Naive thymus-derived CD4-positive, alpha-beta T cell (primary cell): ENCODE measurements at regions of chr1 and their contacts with region 1.

Region 1: GRCh38 chr1:116570358-116571200 is at the start of gene CD58:
- DNase-seq: peak; percentile 35 to 86 (median 64)
- ATAC-seq: peak; percentile 87
- H3K4me3 ChIP-seq: peak within 1 kb of the TSS; percentile 83
- H3K4me3 Mint-ChIP-seq: peak within 1 kb of the TSS; percentile 86 to 97 (median 90)
- H3K27ac ChIP-seq: peak within 1 kb of the TSS; percentile 70
- H3K27ac Mint-ChIP-seq: peak within 1 kb of the TSS in 7 of 9 donors; percentile 68 to 95 (median 78)
- H3K4me1 ChIP-seq: peaks cover 10 to 30% of the 10 kb centered on the region in 2 donors
- H3K4me1 Mint-ChIP-seq: peaks cover 12 to 62% (median 31%) of the 10 kb centered on the region in 7 donors
- H3K27me3 ChIP-seq: no peaks in the 10 kb centered on the region
- H3K27me3 Mint-ChIP-seq: no peaks in the 10 kb centered on the region
- total RNA-seq, gene CD58: 3.3 to 35.0 (median 4.4) TPM

Region 2: DNA sequence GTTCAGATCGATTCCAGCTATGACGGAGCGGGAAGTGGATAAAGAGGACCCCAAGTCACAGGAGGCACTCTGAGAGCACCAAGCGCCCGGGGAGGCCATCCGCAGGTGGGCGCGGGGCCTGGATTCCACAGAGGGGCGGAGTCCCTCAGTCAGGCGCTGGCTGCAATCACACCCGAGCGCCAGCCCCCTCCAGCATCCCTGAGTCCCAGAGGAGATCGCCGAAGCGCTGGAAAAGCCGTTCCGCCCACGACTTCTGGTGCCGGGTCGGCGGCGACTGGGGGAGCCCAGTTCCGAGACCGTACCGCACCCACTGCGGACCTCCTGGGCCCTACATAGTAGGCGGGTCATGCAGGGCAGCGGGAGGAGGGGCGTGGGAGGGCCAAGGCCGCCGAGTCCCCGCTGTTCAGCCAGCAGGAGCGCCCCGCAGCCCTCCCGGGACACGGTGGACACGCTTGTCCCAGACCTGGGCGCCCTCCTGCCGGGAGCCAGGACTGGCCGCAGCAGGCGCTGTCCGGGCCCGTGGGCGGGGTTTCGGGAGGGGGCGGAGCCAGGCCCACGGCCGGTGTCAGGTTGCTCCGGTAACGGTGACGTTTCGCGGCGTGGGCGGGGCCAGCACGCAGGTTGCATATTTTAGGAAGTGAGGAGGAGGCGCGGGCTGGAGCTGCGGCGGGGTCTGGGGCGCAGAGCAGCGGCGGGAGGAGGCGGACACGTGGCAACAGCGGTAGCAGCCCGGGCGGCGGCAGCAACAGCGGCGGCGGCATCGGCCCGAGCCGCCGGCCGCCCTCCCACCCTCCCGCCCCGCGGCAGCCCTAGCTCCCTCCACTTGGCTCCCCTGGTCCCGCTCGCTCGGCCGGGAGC is 197.8 kb before region 1 on chr1 and contains the start of gene ATP1A1:
- CTCF ChIA-PET with region 1: no interaction called
- POLR2A ChIA-PET with region 1: no interaction called
- intact Hi-C with region 1: loop called in 1 of 2 experiments (anchors 2 kb)
- DNase-seq: peak; percentile 94 to 99 (median 96)
- ATAC-seq: peak; percentile 89
- H3K4me3 ChIP-seq: peak within 1 kb of the TSS; percentile 94
- H3K4me3 Mint-ChIP-seq: peak within 1 kb of the TSS; percentile 91 to 99 (median 98)
- H3K27ac ChIP-seq: peak within 1 kb of the TSS; percentile 98
- H3K27ac Mint-ChIP-seq: peak within 1 kb of the TSS; percentile 89 to 98 (median 96)
- H3K4me1 ChIP-seq: peaks cover 18 to 20% of the 10 kb centered on the region in 2 donors
- H3K4me1 Mint-ChIP-seq: peaks cover 15 to 54% (median 35%) of the 10 kb centered on the region in 7 donors
- H3K27me3 ChIP-seq: no peaks in the 10 kb centered on the region
- H3K27me3 Mint-ChIP-seq: peaks cover 0 to 29% (median 0%) of the 10 kb centered on the region in 5 donors
- total RNA-seq, gene ATP1A1: 228 to 315 (median 287) TPM

Region 3: DNA sequence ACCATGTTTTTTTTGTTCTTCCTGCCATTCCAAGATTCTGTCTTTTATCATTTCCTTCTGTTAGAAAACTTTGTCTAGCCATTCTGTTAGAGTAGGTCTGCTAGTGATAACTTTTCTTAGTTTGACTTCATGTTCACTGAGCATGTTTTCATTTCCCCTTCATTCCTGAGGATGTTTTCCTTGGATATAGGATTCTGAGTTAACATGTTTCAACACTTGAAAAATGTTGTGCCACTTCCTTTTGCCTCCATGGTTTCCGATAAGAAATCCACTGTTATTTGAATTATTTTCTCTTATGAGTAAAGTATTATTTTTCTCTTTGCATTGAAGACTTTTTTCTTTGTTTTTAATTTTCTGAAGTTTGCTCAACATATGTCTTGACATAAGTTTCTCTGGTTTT is 130.9 kb before region 1 on chr1:
- CTCF ChIA-PET with region 1: no interaction called
- POLR2A ChIA-PET with region 1: no interaction called
- intact Hi-C with region 1: no loop called
- DNase-seq: no peak
- ATAC-seq: no peak
- H3K4me3 ChIP-seq: no peak overlapping the region
- H3K4me3 Mint-ChIP-seq: no peak overlapping the region
- H3K27ac ChIP-seq: no peak overlapping the region
- H3K27ac Mint-ChIP-seq: no peak overlapping the region
- H3K4me1 ChIP-seq: no peaks in the 10 kb centered on the region
- H3K4me1 Mint-ChIP-seq: peaks cover 0 to 3% (median 0%) of the 10 kb centered on the region in 7 donors
- H3K27me3 ChIP-seq: no peaks in the 10 kb centered on the region
- H3K27me3 Mint-ChIP-seq: peaks cover 0 to 44% (median 0%) of the 10 kb centered on the region in 5 donors

Region 4: DNA sequence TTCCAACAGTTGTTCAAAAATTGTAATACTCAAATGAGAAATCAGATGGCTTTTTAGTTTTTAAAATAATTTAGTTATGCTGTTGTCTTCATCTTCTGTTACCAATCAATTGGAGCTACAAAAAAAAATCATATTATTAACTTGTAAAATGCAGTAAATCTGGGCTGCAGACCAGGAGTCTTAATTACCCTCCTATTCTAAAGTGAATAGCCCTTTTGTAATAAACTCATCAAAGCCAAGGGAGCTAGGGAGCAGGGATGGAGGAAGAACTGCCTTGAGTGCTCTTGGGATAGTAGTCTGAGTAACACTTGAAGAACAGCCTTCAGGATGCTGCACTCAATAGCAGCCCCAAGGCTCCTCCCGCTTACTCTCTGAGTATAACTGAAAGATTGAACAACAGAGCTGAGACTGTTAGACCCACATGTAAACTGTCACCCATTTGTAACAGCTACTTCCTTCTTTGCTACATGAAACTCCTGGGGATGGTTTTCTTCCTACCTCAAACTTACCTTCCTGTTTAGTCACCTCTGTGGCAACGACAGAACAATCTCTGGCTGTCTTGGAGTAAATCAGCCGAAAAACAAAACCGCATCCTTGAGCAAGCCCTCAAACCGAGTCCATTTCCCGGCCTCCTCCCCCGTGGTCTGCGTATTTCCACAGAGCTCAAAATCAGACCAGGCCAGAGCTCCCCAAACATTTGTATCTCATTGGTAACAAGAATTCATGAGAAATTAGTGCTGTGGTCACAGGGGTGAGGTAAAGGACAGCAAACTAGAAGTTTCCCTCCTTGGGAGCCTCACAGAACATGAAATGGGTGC is 55.7 kb before region 1 on chr1:
- CTCF ChIA-PET with region 1: no interaction called
- POLR2A ChIA-PET with region 1: no interaction called
- intact Hi-C with region 1: loop called (anchors 1 to 5 kb)
- DNase-seq: peak in 8 of 9 donors; percentile 11 to 71 (median 30)
- ATAC-seq: peak; percentile 82
- H3K4me3 ChIP-seq: peak overlapping the region; percentile 12
- H3K4me3 Mint-ChIP-seq: peak overlapping the region; percentile 48 to 82 (median 72)
- H3K27ac ChIP-seq: peak overlapping the region; percentile 25
- H3K27ac Mint-ChIP-seq: peak overlapping the region; percentile 66 to 93 (median 88)
- H3K4me1 ChIP-seq: peaks cover 30 to 49% of the 10 kb centered on the region in 2 donors
- H3K4me1 Mint-ChIP-seq: peaks cover 37 to 72% (median 53%) of the 10 kb centered on the region in 7 donors
- H3K27me3 ChIP-seq: no peaks in the 10 kb centered on the region
- H3K27me3 Mint-ChIP-seq: no peaks in the 10 kb centered on the region

Region 5: GRCh38 chr1:116671912-116672311 is 101.3 kb after region 1 on chr1:
- CTCF ChIA-PET with region 1: no interaction called
- POLR2A ChIA-PET with region 1: no interaction called
- intact Hi-C with region 1: loop called (anchors 2 kb)
- DNase-seq: no peak
- ATAC-seq: no peak
- H3K4me3 ChIP-seq: no peak overlapping the region
- H3K4me3 Mint-ChIP-seq: no peak overlapping the region
- H3K27ac ChIP-seq: no peak overlapping the region
- H3K27ac Mint-ChIP-seq: no peak overlapping the region
- H3K4me1 ChIP-seq: peaks cover 0 to 3% of the 10 kb centered on the region in 2 donors
- H3K4me1 Mint-ChIP-seq: peaks cover 0 to 4% (median 0%) of the 10 kb centered on the region in 7 donors
- H3K27me3 ChIP-seq: no peaks in the 10 kb centered on the region
- H3K27me3 Mint-ChIP-seq: peaks cover 42 to 70% (median 46%) of the 10 kb centered on the region in 5 donors

Region 6: DNA sequence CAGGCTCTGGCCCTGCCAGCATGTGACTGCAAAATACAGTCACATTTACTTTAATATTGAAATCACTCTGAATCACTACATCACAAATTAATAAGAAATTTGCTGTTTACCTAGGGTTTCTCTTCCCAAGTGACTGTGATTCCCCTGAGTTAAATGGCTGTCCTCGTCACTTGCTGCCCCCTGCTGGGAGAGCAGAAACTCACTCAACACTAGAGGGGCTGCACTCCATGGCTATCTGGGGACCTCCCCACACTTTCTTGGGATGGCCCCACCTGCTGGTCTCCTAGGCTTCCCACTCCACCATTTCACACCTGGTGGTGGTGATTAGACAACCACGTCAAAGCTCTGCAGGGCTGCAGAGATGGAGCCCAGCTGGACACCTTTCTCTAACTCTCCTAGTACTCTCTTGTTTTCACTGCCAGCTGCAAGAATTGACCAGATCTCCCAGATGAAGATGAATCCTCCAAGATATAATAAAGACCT is 247.0 kb after region 1 on chr1:
- CTCF ChIA-PET with region 1: interaction called, 3 read pairs
- POLR2A ChIA-PET with region 1: no interaction called
- intact Hi-C with region 1: loop called (anchors 2 to 5 kb)
- DNase-seq: peak; percentile 43 to 67 (median 63)
- ATAC-seq: peak; percentile 85
- H3K4me3 ChIP-seq: no peak overlapping the region
- H3K4me3 Mint-ChIP-seq: peak overlapping the region; percentile 4 to 75 (median 58)
- H3K27ac ChIP-seq: no peak overlapping the region
- H3K27ac Mint-ChIP-seq: peak overlapping the region in 8 of 9 donors; percentile 22 to 85 (median 82)
- H3K4me1 ChIP-seq: peaks cover 23 to 33% of the 10 kb centered on the region in 2 donors
- H3K4me1 Mint-ChIP-seq: peaks cover 20 to 58% (median 34%) of the 10 kb centered on the region in 7 donors
- H3K27me3 ChIP-seq: no peaks in the 10 kb centered on the region
- H3K27me3 Mint-ChIP-seq: no peaks in the 10 kb centered on the region

Region 7: GRCh38 chr1:117128323-117129079 is 557.9 kb after region 1 on chr1:
- CTCF ChIA-PET with region 1: interaction called, 7 read pairs
- POLR2A ChIA-PET with region 1: no interaction called
- intact Hi-C with region 1: loop called (anchors 1 kb)
- DNase-seq: peak in 5 of 9 donors; percentile 24 to 42 (median 31)
- ATAC-seq: peak; percentile 61
- H3K4me3 ChIP-seq: no peak overlapping the region
- H3K4me3 Mint-ChIP-seq: no peak overlapping the region
- H3K27ac ChIP-seq: no peak overlapping the region
- H3K27ac Mint-ChIP-seq: no peak overlapping the region
- H3K4me1 ChIP-seq: no peaks in the 10 kb centered on the region
- H3K4me1 Mint-ChIP-seq: peaks cover 0 to 5% (median 5%) of the 10 kb centered on the region in 7 donors
- H3K27me3 ChIP-seq: no peaks in the 10 kb centered on the region
- H3K27me3 Mint-ChIP-seq: peaks cover 5 to 30% (median 12%) of the 10 kb centered on the region in 5 donors

Region 8: DNA sequence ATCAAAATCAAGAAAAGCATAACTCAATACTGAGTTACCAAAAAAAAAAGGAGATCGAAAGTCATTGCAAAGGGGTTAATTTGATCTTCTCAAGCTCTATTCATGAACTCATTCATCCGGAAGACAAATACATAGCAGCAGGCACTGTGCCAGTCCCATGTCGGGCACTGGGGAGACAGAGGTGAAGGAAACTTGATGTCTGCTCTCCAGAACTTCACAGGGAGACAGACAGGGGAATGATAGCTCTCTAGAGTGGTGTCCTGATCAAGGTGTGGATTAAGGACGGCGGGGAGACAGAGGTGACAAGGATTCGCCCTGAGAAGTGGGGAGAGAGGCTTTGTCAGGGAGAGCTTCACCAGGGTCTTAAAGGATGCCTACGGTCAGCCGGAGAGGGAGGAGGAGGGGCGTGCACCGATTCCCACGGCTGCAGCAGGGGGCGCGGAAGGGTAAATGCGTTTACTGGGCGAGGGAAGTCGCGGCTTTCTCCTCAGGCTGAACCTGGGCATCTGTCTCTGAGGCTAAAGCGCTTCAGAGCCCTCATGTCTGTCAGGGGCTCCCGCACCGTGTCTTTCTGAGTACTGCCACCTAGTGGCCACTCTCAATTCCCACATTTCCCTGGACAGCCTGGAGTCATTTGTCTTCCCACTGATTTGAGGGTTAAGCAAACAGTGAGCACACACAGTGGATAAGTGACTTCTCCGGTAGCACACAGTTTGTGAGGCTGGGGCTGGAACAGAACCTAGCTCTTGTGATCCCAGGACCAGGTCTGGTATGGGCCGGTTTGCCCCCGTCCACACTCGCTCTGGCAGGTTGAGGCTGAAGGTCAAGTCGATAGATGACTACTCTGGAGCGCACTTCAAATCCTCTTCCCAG is 1188.1 kb after region 1 on chr1:
- CTCF ChIA-PET with region 1: no interaction called
- POLR2A ChIA-PET with region 1: no interaction called
- intact Hi-C with region 1: loop called in 1 of 2 experiments (anchors 5 kb)
- DNase-seq: peak; percentile 35 to 68 (median 61)
- ATAC-seq: peak; percentile 95
- H3K4me3 ChIP-seq: peak overlapping the region; percentile 59
- H3K4me3 Mint-ChIP-seq: peak overlapping the region; percentile 66 to 93 (median 84)
- H3K27ac ChIP-seq: no peak overlapping the region
- H3K27ac Mint-ChIP-seq: peak overlapping the region in 4 of 9 donors; percentile 3 to 47 (median 42)
- H3K4me1 ChIP-seq: peaks cover 0 to 3% of the 10 kb centered on the region in 2 donors
- H3K4me1 Mint-ChIP-seq: peaks cover 0 to 16% (median 6%) of the 10 kb centered on the region in 7 donors
- H3K27me3 ChIP-seq: no peaks in the 10 kb centered on the region
- H3K27me3 Mint-ChIP-seq: peaks cover 0 to 43% (median 5%) of the 10 kb centered on the region in 5 donors